ENCODE measurements at regions of chr9 and their contacts with region 1.

Region 1: GRCh38 chr9:116860509-116861120 is 173.5 kb downstream of the TRIM32 start:
- DNase-seq: peak; percentile 87
- ATAC-seq: peak; percentile 98
- H3K4me3 Mint-ChIP-seq: no peak overlapping the region
- H3K27ac Mint-ChIP-seq: 0 out of 2 replicates have a peak overlapping the region, but pooled peaks have one; percentile 47
- H3K4me1 Mint-ChIP-seq: peaks cover 16% of the 10 kb centered on the region
- H3K27me3 Mint-ChIP-seq: no peaks in the 10 kb centered on the region
- CTCF ChIP-seq: peak; percentile 78

Region 2: GRCh38 chr9:116724123-116724522 is 136.5 kb before region 1 on chr9:
- CTCF ChIA-PET with region 1: interaction called, 18 read pairs
- POLR2A ChIA-PET with region 1: no interaction called
- DNase-seq: no peak
- ATAC-seq: no peak
- H3K4me3 Mint-ChIP-seq: no peak overlapping the region
- H3K27ac Mint-ChIP-seq: no peak overlapping the region
- H3K4me1 Mint-ChIP-seq: peaks cover 26% of the 10 kb centered on the region
- H3K27me3 Mint-ChIP-seq: no peaks in the 10 kb centered on the region
- CTCF ChIP-seq: no peak

Region 3: GRCh38 chr9:116795821-116796220 is 64.8 kb before region 1 on chr9:
- CTCF ChIA-PET with region 1: interaction called, 17 read pairs
- POLR2A ChIA-PET with region 1: no interaction called
- DNase-seq: no peak
- ATAC-seq: no peak; the same call in 1 of the 2 replicates
- H3K4me3 Mint-ChIP-seq: no peak overlapping the region
- H3K27ac Mint-ChIP-seq: no peak overlapping the region
- H3K4me1 Mint-ChIP-seq: peaks cover 29% of the 10 kb centered on the region
- H3K27me3 Mint-ChIP-seq: no peaks in the 10 kb centered on the region
- CTCF ChIP-seq: no peak

Region 4: GRCh38 chr9:116817762-116818161 is 42.9 kb before region 1 on chr9:
- CTCF ChIA-PET with region 1: interaction called, 10 read pairs
- POLR2A ChIA-PET with region 1: no interaction called
- DNase-seq: no peak
- ATAC-seq: no peak
- H3K4me3 Mint-ChIP-seq: no peak overlapping the region
- H3K27ac Mint-ChIP-seq: no peak overlapping the region
- H3K4me1 Mint-ChIP-seq: peaks cover 46% of the 10 kb centered on the region
- H3K27me3 Mint-ChIP-seq: no peaks in the 10 kb centered on the region
- CTCF ChIP-seq: no peak

Region 5: GRCh38 chr9:116842658-116843057 is 18.0 kb before region 1 on chr9:
- CTCF ChIA-PET with region 1: interaction called, 67 read pairs
- POLR2A ChIA-PET with region 1: interaction called, 3 read pairs
- DNase-seq: peak; percentile 77
- ATAC-seq: peak; percentile 96
- H3K4me3 Mint-ChIP-seq: no peak overlapping the region
- H3K27ac Mint-ChIP-seq: no peak overlapping the region
- H3K4me1 Mint-ChIP-seq: peaks cover 38% of the 10 kb centered on the region
- H3K27me3 Mint-ChIP-seq: no peaks in the 10 kb centered on the region; the same call in 1 of the 2 replicates
- CTCF ChIP-seq: no peak